Common myeloid progenitor, CD34-positive (primary cell): ENCODE measurements at regions of chr2 and their contacts with region 1.

Region 1: GRCh38 chr2:60439219-60439974 is 114.1 kb downstream of the BCL11A start:
- DNase-seq: peak; percentile 92 to 97 (median 96)
- H3K4me3 ChIP-seq: peak overlapping the region in 3 of 7 experiments; percentile 19 to 65 (median 34)
- H3K27ac ChIP-seq: peak overlapping the region in 1 of 2 experiments; percentile 26
- H3K4me1 ChIP-seq: peaks cover 15 to 55% (median 26%) of the 10 kb centered on the region in 4 experiments
- H3K27me3 ChIP-seq: no peaks in the 10 kb centered on the region

Region 2: DNA sequence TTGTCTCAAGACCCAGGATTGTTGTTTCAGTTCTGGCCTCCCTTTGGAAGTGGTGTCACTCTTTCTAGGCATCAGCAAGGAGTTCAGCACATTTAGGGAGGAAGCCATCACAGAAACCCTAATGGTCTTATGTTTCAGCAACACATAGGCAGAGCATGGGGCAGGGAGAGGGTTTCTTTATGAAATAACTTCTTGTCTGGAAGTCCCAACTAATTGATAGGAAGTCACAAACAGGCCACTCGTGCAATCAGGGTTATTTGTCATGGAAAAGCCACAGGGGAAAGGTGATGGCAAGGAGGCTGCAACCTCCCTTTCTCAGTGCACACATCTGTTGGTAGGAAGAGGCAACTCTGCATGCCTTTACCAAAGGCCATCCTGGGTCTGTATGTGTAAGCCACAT is 11.1 kb after region 1 on chr2:
- CTCF ChIA-PET with region 1: interaction called, 12 read pairs
- POLR2A ChIA-PET with region 1: interaction called, 3 read pairs
- DNase-seq: no peak
- H3K4me3 ChIP-seq: no peak overlapping the region
- H3K27ac ChIP-seq: peak overlapping the region in 1 of 2 experiments; percentile 20
- H3K4me1 ChIP-seq: peaks cover 0 to 23% (median 5%) of the 10 kb centered on the region in 4 experiments
- H3K27me3 ChIP-seq: no peaks in the 10 kb centered on the region

Region 3: GRCh38 chr2:60463249-60463648 is 23.9 kb after region 1 on chr2:
- CTCF ChIA-PET with region 1: interaction called, 16 read pairs
- POLR2A ChIA-PET with region 1: no interaction called
- DNase-seq: peak; percentile 54 to 82 (median 82)
- H3K4me3 ChIP-seq: peak overlapping the region in 2 of 7 experiments; percentile 4 to 35
- H3K27ac ChIP-seq: peak overlapping the region in 1 of 2 experiments; percentile 26
- H3K4me1 ChIP-seq: peaks cover 5 to 35% (median 14%) of the 10 kb centered on the region in 4 experiments
- H3K27me3 ChIP-seq: no peaks in the 10 kb centered on the region

Region 4: DNA sequence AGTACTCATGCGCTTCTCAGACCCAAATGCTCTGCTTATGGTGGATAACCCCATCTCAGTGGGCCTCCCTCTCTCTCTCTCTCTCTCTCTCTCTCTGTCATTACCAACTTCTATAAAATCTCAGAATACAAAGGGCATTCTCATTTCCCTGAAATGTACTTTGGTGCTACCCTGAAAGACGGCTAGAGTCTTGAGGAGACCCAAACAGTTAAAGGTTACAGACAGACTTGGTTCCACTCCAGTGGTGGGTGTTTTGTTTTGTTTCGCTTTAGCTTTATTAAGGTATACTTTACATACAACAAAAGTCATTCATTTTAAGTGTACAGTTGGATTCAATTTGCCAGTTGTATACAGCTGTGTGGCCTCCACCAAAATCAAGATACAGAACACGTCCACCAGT is 53.2 kb after region 1 on chr2:
- CTCF ChIA-PET with region 1: interaction called, 11 read pairs
- POLR2A ChIA-PET with region 1: no interaction called
- DNase-seq: no peak
- H3K4me3 ChIP-seq: no peak overlapping the region
- H3K27ac ChIP-seq: no peak overlapping the region
- H3K4me1 ChIP-seq: peaks cover 4 to 49% (median 24%) of the 10 kb centered on the region in 4 experiments
- H3K27me3 ChIP-seq: no peaks in the 10 kb centered on the region

Region 5: GRCh38 chr2:60581433-60582282 is 142.3 kb after region 1 on chr2:
- CTCF ChIA-PET with region 1: no interaction called
- POLR2A ChIA-PET with region 1: no interaction called
- DNase-seq: peak; percentile 75 to 87 (median 87)
- H3K4me3 ChIP-seq: peak overlapping the region; percentile 20 to 80 (median 57)
- H3K27ac ChIP-seq: no peak overlapping the region
- H3K4me1 ChIP-seq: peaks cover 0 to 9% (median 4%) of the 10 kb centered on the region in 4 experiments
- H3K27me3 ChIP-seq: peaks cover 0 to 3% (median 0%) of the 10 kb centered on the region in 5 experiments